Panc1 (cell line): ENCODE measurements at regions of chr6 and their contacts with region 1.

Region 1: GRCh38 chr6:113879186-113880096 is 22.3 kb downstream of the MARCKS start:
- DNase-seq: no peak
- ATAC-seq: peak; percentile 100
- H3K4me3 ChIP-seq: no peak overlapping the region
- H3K27ac ChIP-seq: no peak overlapping the region
- H3K4me1 ChIP-seq: no peaks in the 10 kb centered on the region
- H3K27me3 ChIP-seq: no peaks in the 10 kb centered on the region
- CTCF ChIP-seq: peak; percentile 93

Region 2: DNA sequence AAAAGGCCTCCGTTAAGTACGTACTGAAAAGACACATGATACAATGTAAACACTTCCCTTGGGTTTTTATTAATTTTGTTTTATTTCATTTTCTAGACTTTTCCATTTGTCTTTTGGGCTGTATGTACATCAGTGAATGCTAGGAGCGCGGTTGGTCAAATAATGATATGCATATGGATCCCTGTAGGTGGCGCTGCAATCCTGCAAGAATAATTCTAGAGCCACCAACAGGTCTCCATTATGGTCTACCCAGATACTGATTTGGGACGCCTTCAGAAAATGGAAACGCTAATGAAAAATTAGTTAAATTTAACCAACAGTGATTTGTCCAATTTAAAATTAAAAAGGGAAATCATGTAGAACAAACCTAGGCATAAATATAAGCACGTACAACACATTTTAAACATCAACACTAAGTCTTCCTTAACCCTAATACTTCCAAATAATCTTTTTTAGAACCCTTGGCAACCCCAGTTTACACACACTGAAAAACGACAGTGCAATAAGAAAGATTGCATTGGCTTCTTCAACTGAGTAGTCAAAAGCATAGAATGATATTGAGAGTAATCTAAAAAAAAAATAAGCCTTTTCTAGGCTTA is 1098.8 kb before region 1 on chr6:
- CTCF ChIA-PET with region 1: no interaction called
- POLR2A ChIA-PET with region 1: no interaction called
- in situ Hi-C with region 1: no loop called
- intact Hi-C with region 1: loop called (anchors 5 kb)
- DNase-seq: peak; percentile 60
- ATAC-seq: peak; percentile 91
- H3K4me3 ChIP-seq: no peak overlapping the region
- H3K27ac ChIP-seq: no peak overlapping the region; the same call in 1 of the 2 replicates
- H3K4me1 ChIP-seq: no peaks in the 10 kb centered on the region
- H3K27me3 ChIP-seq: no peaks in the 10 kb centered on the region
- CTCF ChIP-seq: peak; percentile 90

Region 3: GRCh38 chr6:113610377-113610988 is 269.0 kb before region 1 on chr6:
- CTCF ChIA-PET with region 1: no interaction called
- POLR2A ChIA-PET with region 1: no interaction called
- in situ Hi-C with region 1: no loop called
- intact Hi-C with region 1: no loop called
- DNase-seq: no peak
- ATAC-seq: no peak
- H3K4me3 ChIP-seq: no peak overlapping the region
- H3K27ac ChIP-seq: no peak overlapping the region
- H3K4me1 ChIP-seq: no peaks in the 10 kb centered on the region
- H3K27me3 ChIP-seq: no peaks in the 10 kb centered on the region
- CTCF ChIP-seq: no peak

Region 4: GRCh38 chr6:113623129-113623528 is 256.3 kb before region 1 on chr6:
- CTCF ChIA-PET with region 1: interaction called, 11 read pairs
- POLR2A ChIA-PET with region 1: no interaction called
- in situ Hi-C with region 1: no loop called
- intact Hi-C with region 1: no loop called
- DNase-seq: no peak
- ATAC-seq: no peak
- H3K4me3 ChIP-seq: no peak overlapping the region
- H3K27ac ChIP-seq: no peak overlapping the region
- H3K4me1 ChIP-seq: no peaks in the 10 kb centered on the region
- H3K27me3 ChIP-seq: peaks cover 3% of the 10 kb centered on the region; the same call in 1 of the 2 replicates
- CTCF ChIP-seq: no peak

Region 5: DNA sequence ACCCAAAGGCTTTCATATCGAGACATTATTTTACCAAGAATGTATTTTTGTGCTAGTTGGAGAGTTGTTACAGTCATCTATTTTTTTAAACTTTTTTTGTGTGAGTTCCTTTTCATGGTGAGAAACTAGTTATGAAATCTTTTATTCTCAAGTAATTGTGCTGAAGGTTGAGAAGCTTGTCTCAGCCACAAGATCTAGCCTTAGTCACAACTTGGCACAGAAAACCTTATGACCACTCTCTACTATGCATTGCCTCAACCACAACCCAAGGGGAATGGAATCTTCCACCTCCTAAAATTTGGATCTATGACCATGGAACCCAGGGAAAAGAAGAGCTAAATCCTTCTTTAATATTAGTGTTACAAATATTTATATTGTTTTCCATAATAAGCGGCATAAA is 404.8 kb after region 1 on chr6:
- CTCF ChIA-PET with region 1: no interaction called
- POLR2A ChIA-PET with region 1: no interaction called
- in situ Hi-C with region 1: no loop called
- intact Hi-C with region 1: no loop called
- DNase-seq: no peak
- ATAC-seq: no peak
- H3K4me3 ChIP-seq: no peak overlapping the region
- H3K27ac ChIP-seq: no peak overlapping the region
- H3K4me1 ChIP-seq: no peaks in the 10 kb centered on the region
- H3K27me3 ChIP-seq: no peaks in the 10 kb centered on the region
- CTCF ChIP-seq: no peak